Activated T-helper 1 cell treated with anti-CD3 and anti-CD28 coated beads, Interleukin-12 subunit alpha, Interleukin-12 subunit beta, Interleukin-2, Interleukin-4 antibody, amounts not matched to agents 30 ng/mL and 10 ng/mL and 1 ng/mL, durations not matched to agents 14 hours and 24 hours and 36 hours (primary cell): ENCODE measurements at regions of chr15 and their contacts with region 1.

Region 1: GRCh38 chr15:72783563-72784237 is at the start of gene ADPGK:
- DNase-seq: peak; percentile 95
- H3K4me3 Mint-ChIP-seq: peak within 1 kb of the TSS; percentile 92
- H3K27ac Mint-ChIP-seq: peak within 1 kb of the TSS; percentile 99
- H3K4me1 Mint-ChIP-seq: peaks cover 68% of the 10 kb centered on the region
- H3K27me3 Mint-ChIP-seq: no peaks in the 10 kb centered on the region
- total RNA-seq, gene ADPGK: 94.0 and 101 TPM in 2 replicates

Region 2: GRCh38 chr15:72272213-72273002 is 511.3 kb before region 1 on chr15 and contains the start of gene PARP6:
- intact Hi-C with region 1: loop called (anchors 5 kb)
- DNase-seq: peak; percentile 99
- H3K4me3 Mint-ChIP-seq: peak within 1 kb of the TSS; percentile 95
- H3K27ac Mint-ChIP-seq: peak within 1 kb of the TSS; percentile 90
- H3K4me1 Mint-ChIP-seq: peaks cover 43% of the 10 kb centered on the region
- H3K27me3 Mint-ChIP-seq: peaks cover 3% of the 10 kb centered on the region
- total RNA-seq, gene PARP6: 79.3 and 87.1 TPM in 2 replicates

Region 3: DNA sequence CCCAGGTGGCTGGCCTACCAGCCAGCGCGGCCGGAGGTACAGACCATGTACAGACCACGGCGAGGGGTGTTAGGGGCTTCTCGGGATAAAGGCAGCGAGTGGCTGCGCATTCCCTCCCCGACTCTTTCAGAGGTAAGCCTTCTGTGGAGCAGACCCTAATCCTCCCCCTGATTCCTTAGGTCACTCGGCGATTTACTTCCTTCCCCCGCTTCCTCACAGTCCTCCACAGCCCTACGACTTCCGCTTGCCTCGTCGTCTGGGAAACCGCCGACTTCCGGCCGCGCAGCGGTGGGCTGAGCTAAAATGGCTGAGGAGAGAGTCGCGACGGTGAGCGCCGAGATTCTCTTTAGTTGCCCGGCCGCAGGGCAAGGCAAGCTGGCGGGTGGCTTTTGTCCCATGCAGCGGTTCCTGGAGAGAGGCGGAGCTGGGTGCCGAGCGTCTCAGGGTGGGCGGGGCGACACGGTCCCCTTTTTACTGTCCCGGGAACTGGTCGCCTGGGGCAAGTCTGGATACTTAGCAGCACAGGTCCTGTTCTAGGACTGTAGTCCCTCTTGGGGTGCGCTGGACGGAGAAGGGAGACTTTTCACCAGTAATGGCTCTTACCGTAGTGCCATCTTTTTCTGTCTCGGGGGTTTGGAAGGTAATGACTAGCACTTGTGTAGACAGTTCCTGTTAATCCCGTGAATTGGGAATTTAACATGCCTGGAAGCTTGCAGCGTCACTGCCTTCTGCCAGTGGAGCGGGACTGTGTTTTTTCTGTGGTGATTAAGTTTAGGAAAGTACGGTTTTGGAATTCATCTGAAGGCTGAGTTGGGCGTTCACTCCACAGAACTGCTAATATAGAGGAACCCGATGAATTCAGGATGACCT is 97.5 kb before region 1 on chr15 and contains the starts of genes BBS4 and HIGD2B:
- intact Hi-C with region 1: loop called (anchors 1 kb)
- DNase-seq: peak; percentile 84
- H3K4me3 Mint-ChIP-seq: peak within 1 kb of the TSS; percentile 93
- H3K27ac Mint-ChIP-seq: peak within 1 kb of the TSS; percentile 87
- H3K4me1 Mint-ChIP-seq: peaks cover 21% of the 10 kb centered on the region
- H3K27me3 Mint-ChIP-seq: peaks cover 4% of the 10 kb centered on the region
- total RNA-seq, gene BBS4: 10.0 and 10.3 TPM in 2 replicates
- total RNA-seq, gene HIGD2B: 0.29 TPM in 1 of 2 replicates, not detected in the other

Region 4: GRCh38 chr15:72796515-72797337 is 13.0 kb after region 1 on chr15:
- intact Hi-C with region 1: loop called (anchors 1 kb)
- DNase-seq: peak; percentile 16
- H3K4me3 Mint-ChIP-seq: peak overlapping the region; percentile 85
- H3K27ac Mint-ChIP-seq: peak overlapping the region; percentile 65
- H3K4me1 Mint-ChIP-seq: peaks cover 11% of the 10 kb centered on the region
- H3K27me3 Mint-ChIP-seq: peaks cover 32% of the 10 kb centered on the region

Region 5: GRCh38 chr15:73142802-73143762 is 359.4 kb after region 1 on chr15:
- intact Hi-C with region 1: loop called (anchors 5 kb)
- DNase-seq: no peak
- H3K4me3 Mint-ChIP-seq: no peak overlapping the region
- H3K27ac Mint-ChIP-seq: peak overlapping the region; percentile 84
- H3K4me1 Mint-ChIP-seq: peaks cover 34% of the 10 kb centered on the region
- H3K27me3 Mint-ChIP-seq: peaks cover 2% of the 10 kb centered on the region